K562 (cell line): ENCODE measurements at regions of chr15 and their contacts with region 1.

Region 1: DNA sequence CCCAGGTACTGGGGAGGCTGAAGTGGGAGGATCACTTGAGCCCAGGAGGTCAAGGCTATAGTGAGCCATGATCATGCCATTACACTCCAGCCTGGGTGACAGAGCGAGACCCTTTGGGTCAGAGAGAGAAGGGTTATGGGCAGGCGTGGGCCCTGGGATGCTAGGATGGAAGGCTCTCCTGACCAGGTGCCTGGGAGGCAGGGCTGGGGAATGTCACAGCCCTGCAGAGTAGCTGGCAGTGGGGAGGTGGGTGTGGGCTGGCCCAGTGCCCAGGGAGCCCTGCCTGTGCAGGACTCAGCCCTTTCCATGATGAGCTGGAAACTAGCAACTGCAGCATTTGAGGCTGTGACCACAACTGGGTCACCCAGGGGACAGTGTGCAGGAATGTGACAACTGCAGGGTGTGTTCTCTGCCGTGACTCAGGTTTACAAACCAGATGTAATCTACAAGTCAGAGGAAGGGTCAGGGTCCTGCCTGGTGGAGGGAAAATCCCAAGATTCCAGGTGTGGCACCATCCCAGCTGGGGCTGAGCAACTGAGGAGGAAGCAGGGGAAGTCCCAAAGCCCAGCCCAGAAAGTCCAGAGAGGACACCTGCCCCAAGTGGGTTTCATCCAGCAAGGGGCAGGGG is 45.4 kb downstream of the SLC28A1 start:
- DNase-seq: peak; percentile 67 to 86 (median 71)
- ATAC-seq: peak; percentile 82
- H3K4me3 ChIP-seq: no peak overlapping the region
- H3K27ac ChIP-seq: peak overlapping the region; percentile 62
- H3K4me1 ChIP-seq: peaks cover 16 to 22% of the 10 kb centered on the region in 2 experiments
- H3K27me3 ChIP-seq: no peaks in the 10 kb centered on the region
- CTCF ChIP-seq: no peak
- EP300 ChIP-seq: peak; percentile 66
- POLR2A ChIP-seq: no peak
- RAD21 ChIP-seq: no peak

Region 2: GRCh38 chr15:84839689-84840654 is 89.9 kb before region 1 on chr15:
- CTCF ChIA-PET with region 1: no interaction called
- POLR2A ChIA-PET with region 1: no interaction called
- in situ Hi-C with region 1: no loop called
- intact Hi-C with region 1: loop called (anchors 5 kb)
- DNase-seq: no peak
- ATAC-seq: no peak
- H3K4me3 ChIP-seq: no peak overlapping the region
- H3K27ac ChIP-seq: no peak overlapping the region
- H3K4me1 ChIP-seq: peaks cover 6 to 17% of the 10 kb centered on the region in 2 experiments; a peak in 4 of 5 replicates
- H3K27me3 ChIP-seq: peaks cover 4 to 8% of the 10 kb centered on the region in 2 experiments; a peak in 4 of 5 replicates
- CTCF ChIP-seq: no peak
- EP300 ChIP-seq: no peak
- POLR2A ChIP-seq: no peak
- RAD21 ChIP-seq: no peak

Region 3: GRCh38 chr15:84863565-84864443 is 66.1 kb before region 1 on chr15:
- CTCF ChIA-PET with region 1: no interaction called
- POLR2A ChIA-PET with region 1: no interaction called
- in situ Hi-C with region 1: no loop called
- intact Hi-C with region 1: loop called (anchors 5 kb)
- DNase-seq: no peak
- ATAC-seq: no peak; the same call in 2 of the 3 replicates
- H3K4me3 ChIP-seq: no peak overlapping the region
- H3K27ac ChIP-seq: no peak overlapping the region
- H3K4me1 ChIP-seq: no peaks in the 10 kb centered on the region; a peak in 1 of 5 replicates
- H3K27me3 ChIP-seq: peaks cover 11 to 48% of the 10 kb centered on the region in 2 experiments; a peak in 4 of 5 replicates
- CTCF ChIP-seq: peak; percentile 2 to 33 (median 13); a peak in 2 of 6 replicates
- EP300 ChIP-seq: no peak
- POLR2A ChIP-seq: no peak
- RAD21 ChIP-seq: peak in 1 of 2 experiments; percentile 30; a peak in 1 of 4 replicates

Region 4: DNA sequence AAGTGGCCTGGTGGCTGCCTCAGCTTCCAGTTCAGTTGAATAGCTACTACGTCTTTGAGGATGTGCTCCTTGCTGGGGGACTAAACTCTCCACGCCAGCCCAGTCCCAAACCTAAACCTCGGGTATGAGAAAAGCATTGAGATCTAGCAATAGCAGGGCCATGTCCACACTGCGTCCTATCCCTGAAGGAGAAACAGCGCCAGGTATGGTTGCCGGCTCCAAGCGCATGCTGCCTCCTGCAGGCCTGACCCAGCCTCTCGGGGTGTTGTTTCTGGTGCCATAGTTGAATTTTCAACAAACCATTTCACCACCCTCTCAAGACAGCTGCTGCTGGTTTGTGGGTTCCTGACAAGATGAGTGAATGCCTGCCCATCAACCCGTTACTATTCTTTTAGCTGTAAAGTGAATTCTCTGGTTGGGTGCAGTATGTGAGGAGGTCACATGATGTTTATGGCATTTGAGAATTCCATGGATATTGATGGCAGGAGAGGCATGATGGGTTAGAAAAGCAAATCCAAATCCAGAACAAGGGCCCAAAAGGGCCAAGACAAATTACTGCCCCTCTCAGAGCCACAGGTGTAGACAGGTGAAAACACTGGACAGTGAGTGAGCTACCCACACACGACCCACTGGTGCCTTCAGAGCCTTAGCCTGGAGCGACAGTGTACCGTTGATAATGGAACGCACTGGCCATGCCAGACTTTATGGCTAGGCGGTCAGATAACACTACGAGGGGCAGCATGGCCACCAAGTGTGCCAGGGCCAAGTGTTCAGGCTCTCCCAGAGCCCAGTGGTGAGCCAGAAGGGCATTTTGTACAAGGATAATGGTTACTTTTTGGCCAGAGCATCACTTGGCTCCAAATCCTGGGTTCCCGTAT is 58.2 kb before region 1 on chr15:
- CTCF ChIA-PET with region 1: no interaction called
- POLR2A ChIA-PET with region 1: no interaction called
- in situ Hi-C with region 1: no loop called
- intact Hi-C with region 1: loop called (anchors 5 kb)
- DNase-seq: peak in 3 of 4 experiments; percentile 35 to 48 (median 43)
- ATAC-seq: peak; percentile 80
- H3K4me3 ChIP-seq: no peak overlapping the region
- H3K27ac ChIP-seq: no peak overlapping the region
- H3K4me1 ChIP-seq: no peaks in the 10 kb centered on the region; a peak in 1 of 5 replicates
- H3K27me3 ChIP-seq: peaks cover 20 to 52% of the 10 kb centered on the region in 2 experiments
- CTCF ChIP-seq: peak; percentile 67 to 70 (median 70)
- EP300 ChIP-seq: no peak
- POLR2A ChIP-seq: no peak
- RAD21 ChIP-seq: peak; percentile 34 to 65